IMR-90 (cell line): ENCODE measurements at regions of chr9 and their contacts with region 1.

Region 1: DNA sequence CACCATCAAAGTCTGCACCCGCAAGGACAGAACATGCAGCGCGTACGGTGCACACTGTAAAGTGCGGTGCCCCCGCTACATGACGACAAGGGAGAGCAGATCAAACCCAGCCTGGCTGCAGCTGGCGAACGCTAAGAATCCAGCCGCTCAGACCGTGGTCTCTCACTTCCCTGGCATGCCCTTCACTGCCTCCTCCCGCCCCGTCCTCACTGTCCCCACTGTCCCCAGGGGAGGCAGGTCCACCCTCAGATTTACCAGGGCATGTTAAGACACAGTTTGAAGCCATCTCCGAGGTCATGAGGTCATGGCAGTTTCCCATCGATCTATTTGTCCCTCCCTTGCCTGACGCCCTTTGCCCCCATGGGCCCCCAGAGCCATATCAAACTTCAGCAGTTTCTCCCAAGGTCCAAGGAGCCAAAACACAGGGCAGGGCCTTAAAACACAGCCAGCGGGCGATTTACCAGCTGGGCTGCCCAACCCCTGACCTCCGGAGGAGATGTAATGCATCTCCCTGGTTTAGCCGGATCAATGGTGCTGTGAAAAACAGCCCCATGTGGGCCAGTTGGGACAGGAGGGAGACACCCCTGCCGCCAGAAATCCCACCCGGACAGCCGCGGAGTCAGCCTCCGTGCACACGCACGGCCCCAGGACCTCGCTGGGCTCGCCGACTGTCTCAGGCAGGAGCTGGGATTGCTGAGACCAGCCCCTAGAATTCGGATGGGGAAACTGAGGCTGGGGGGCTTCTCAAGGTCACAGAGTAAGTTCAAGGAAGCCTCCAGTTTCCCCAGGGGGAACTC is 52.3 kb upstream of the FUBP3 start:
- DNase-seq: no peak
- ATAC-seq: no peak
- H3K4me3 ChIP-seq: no peak overlapping the region
- H3K27ac ChIP-seq: no peak overlapping the region
- H3K4me1 ChIP-seq: no peaks in the 10 kb centered on the region
- H3K27me3 ChIP-seq: peaks cover 62% of the 10 kb centered on the region
- CTCF ChIP-seq: no peak
- POLR2A ChIP-seq: no peak
- RAD21 ChIP-seq: no peak

Region 2: DNA sequence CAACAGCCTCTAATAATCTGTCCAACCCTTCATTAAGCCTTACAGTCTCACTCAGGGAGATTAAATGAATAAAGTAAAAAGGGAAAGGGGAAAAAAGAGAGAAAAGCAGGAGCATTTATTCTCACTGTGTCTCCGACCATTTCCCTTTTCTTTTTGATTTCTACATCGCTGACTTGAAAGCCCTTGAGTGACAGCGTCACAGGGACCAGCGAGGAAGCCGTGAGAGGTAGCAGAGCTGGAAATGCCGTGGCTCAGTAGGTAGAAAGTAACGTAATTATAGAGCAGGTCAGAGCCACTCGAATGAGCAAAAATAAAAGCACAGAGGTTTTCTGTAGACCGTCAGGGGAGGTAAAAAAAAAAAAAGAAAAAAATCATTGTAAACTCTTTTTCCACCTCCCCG is 29.9 kb before region 1 on chr9:
- CTCF ChIA-PET with region 1: no interaction called
- POLR2A ChIA-PET with region 1: no interaction called
- dilution Hi-C with region 1: no loop called
- in situ Hi-C with region 1: no loop called
- intact Hi-C with region 1: loop called (anchors 1 kb)
- DNase-seq: no peak
- ATAC-seq: no peak
- H3K4me3 ChIP-seq: no peak overlapping the region
- H3K27ac ChIP-seq: no peak overlapping the region
- H3K4me1 ChIP-seq: no peaks in the 10 kb centered on the region
- H3K27me3 ChIP-seq: peaks cover 4% of the 10 kb centered on the region
- CTCF ChIP-seq: no peak
- POLR2A ChIP-seq: no peak
- RAD21 ChIP-seq: no peak